A549 (cell line): ENCODE measurements at regions of chr5 and their contacts with region 1.

Region 1: GRCh38 chr5:176660860-176661641 is 13.8 kb downstream of the TSPAN17 start:
- DNase-seq: peak; percentile 75 to 95
- ATAC-seq: peak; percentile 64 to 90
- H3K4me3 ChIP-seq: no peak overlapping the region
- H3K27ac ChIP-seq: no peak overlapping the region
- H3K4me1 ChIP-seq: no peaks in the 10 kb centered on the region
- CTCF ChIP-seq: peak; percentile 93
- EP300 ChIP-seq: no peak
- POLR2A ChIP-seq: no peak
- RAD21 ChIP-seq: peak; percentile 96 to 97

Region 2: GRCh38 chr5:176647030-176647866 is 13.8 kb before region 1 on chr5 and contains the start of gene TSPAN17:
- CTCF ChIA-PET with region 1: interaction called, 68 read pairs
- POLR2A ChIA-PET with region 1: interaction called, 11 read pairs
- DNase-seq: peak; percentile 92 to 98
- ATAC-seq: peak; percentile 82 to 95
- H3K4me3 ChIP-seq: peak within 1 kb of the TSS; percentile 66
- H3K27ac ChIP-seq: peak within 1 kb of the TSS; percentile 86 to 94
- H3K4me1 ChIP-seq: peaks cover 14% of the 10 kb centered on the region
- CTCF ChIP-seq: peak; percentile 30; the same call in 2 of the 3 replicates
- EP300 ChIP-seq: no peak
- POLR2A ChIP-seq: peak; percentile 97
- RAD21 ChIP-seq: peak; percentile 32 to 66
- polyA plus RNA-seq, gene TSPAN17: 33.7 and 35.6 TPM in 2 replicates

Region 3: GRCh38 chr5:176693477-176693851 is 32.4 kb after region 1 on chr5:
- CTCF ChIA-PET with region 1: interaction called, 24 read pairs
- POLR2A ChIA-PET with region 1: no interaction called
- DNase-seq: no peak
- ATAC-seq: no peak
- H3K4me3 ChIP-seq: no peak overlapping the region
- H3K27ac ChIP-seq: no peak overlapping the region
- H3K4me1 ChIP-seq: no peaks in the 10 kb centered on the region; the same call in 2 of the 3 replicates
- CTCF ChIP-seq: no peak
- EP300 ChIP-seq: no peak
- POLR2A ChIP-seq: no peak
- RAD21 ChIP-seq: no peak

Region 4: DNA sequence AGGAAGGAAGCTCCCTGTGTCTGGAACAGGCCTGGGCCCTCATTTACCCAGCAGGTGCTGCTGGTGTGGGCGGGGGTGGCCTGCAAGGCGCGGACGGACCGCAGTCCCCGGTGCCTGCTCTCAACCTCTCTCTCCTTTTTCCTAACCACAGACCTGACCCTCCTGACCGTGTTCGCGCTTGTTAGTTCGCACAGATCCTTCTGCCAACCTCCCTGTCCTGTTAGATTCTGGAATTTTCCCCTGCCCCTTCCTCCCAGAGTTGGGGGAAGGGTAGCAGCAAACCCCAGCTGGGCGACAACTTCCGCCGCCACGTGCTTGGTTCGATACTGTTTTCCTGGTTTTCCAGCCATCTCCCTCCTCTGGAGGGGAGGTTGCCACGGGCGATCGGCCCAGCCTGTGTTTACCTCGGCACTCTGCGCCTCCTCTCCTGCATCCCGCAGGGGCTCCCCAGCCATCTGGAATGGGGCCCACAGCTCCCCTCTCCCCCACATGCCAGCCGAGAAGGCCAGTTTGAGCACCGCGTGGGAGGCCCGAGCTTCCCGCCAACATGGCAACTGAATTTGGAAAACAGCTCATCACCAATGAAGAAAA is 78.5 kb after region 1 on chr5:
- CTCF ChIA-PET with region 1: interaction called, 15 read pairs
- POLR2A ChIA-PET with region 1: no interaction called
- DNase-seq: no peak
- ATAC-seq: no peak
- H3K4me3 ChIP-seq: no peak overlapping the region
- H3K27ac ChIP-seq: no peak overlapping the region
- H3K4me1 ChIP-seq: no peaks in the 10 kb centered on the region
- CTCF ChIP-seq: no peak
- EP300 ChIP-seq: no peak
- POLR2A ChIP-seq: no peak
- RAD21 ChIP-seq: no peak

Region 5: GRCh38 chr5:176832162-176832561 is 171.1 kb after region 1 on chr5:
- CTCF ChIA-PET with region 1: interaction called, 11 read pairs
- POLR2A ChIA-PET with region 1: no interaction called
- DNase-seq: no peak
- ATAC-seq: no peak
- H3K4me3 ChIP-seq: no peak overlapping the region
- H3K27ac ChIP-seq: no peak overlapping the region
- H3K4me1 ChIP-seq: no peaks in the 10 kb centered on the region
- CTCF ChIP-seq: no peak
- EP300 ChIP-seq: no peak
- POLR2A ChIP-seq: no peak
- RAD21 ChIP-seq: no peak

Region 6: GRCh38 chr5:176959051-176959450 is 298.0 kb after region 1 on chr5:
- CTCF ChIA-PET with region 1: interaction called, 33 read pairs
- POLR2A ChIA-PET with region 1: no interaction called
- DNase-seq: peak; percentile 36 to 40
- ATAC-seq: peak in 1 of 2 experiments; percentile 75; a peak in 3 of 6 replicates
- H3K4me3 ChIP-seq: no peak overlapping the region
- H3K27ac ChIP-seq: no peak overlapping the region
- H3K4me1 ChIP-seq: no peaks in the 10 kb centered on the region
- CTCF ChIP-seq: peak; percentile 63
- EP300 ChIP-seq: no peak
- POLR2A ChIP-seq: no peak
- RAD21 ChIP-seq: peak; percentile 55 to 57; a peak in 4 of 5 replicates